Activated CD4-positive, alpha-beta T cell treated with anti-CD3 and anti-CD28 coated beads, Interleukin-2, amount 10 ng/mL, durations not matched to agents 24 days and 14 days (primary cell): ENCODE measurements at regions of chr16 and their contacts with region 1.

Region 1: DNA sequence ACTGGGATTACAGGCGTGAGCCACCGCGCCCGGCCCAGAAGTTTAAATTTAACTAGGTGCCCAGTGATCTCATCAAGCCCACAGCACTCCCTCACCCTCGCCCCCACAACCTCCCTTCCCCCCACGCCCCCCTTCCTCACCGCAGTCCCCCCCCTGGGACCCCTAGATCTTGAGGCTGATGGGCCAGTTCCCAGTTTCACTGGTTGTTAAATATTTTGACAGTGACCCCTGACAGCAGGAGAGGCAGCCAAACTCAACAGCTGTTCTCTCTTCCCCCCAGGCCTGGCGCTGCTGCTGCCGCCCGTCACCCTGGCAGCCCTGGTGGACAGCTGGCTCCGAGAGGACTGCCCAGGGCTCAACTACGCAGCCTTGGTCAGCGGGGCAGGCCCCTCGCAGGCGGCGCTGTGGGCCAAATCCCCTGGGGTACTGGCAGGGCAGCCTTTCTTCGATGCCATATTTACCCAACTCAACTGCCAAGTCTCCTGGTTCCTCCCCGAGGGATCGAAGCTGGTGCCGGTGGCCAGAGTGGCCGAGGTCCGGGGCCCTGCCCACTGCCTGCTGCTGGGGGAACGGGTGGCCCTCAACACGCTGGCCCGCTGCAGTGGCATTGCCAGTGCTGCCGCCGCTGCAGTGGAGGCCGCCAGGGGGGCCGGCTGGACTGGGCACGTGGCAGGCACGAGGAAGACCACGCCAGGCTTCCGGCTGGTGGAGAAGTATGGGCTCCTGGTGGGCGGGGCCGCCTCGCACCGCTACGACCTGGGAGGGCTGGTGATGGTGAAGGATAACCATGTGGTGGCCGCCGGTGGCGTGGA is 15.6 kb downstream of the QPRT start:
- DNase-seq: no peak
- H3K4me3 Mint-ChIP-seq: no peak overlapping the region
- H3K27ac Mint-ChIP-seq: no peak overlapping the region
- H3K4me1 Mint-ChIP-seq: peaks cover 9% of the 10 kb centered on the region
- H3K27me3 Mint-ChIP-seq: no peaks in the 10 kb centered on the region

Region 2: DNA sequence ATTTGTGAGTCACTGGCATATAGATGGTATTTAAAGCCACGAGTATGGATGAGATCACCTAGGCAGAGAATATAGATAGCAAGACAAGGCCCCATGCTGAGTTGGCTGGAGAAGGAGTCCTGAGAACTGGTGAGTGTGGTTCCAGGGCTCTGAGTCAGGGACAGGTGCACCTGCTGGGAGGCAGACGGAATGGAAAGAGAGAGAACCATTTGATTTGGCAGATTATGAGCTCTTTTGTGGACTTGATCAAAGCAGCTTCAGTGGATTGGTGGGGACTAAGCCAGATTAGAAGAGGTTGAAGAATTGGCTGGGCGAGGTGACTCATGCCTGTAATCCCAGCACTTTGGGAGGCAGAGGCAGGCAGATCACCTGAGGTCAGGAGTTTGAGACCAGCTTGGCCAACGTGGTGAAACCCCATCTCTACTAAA is 324.2 kb after region 1 on chr16:
- intact Hi-C with region 1: loop called (anchors 1 kb)
- DNase-seq: no peak
- H3K4me3 Mint-ChIP-seq: no peak overlapping the region
- H3K27ac Mint-ChIP-seq: no peak overlapping the region
- H3K4me1 Mint-ChIP-seq: peaks cover 6% of the 10 kb centered on the region
- H3K27me3 Mint-ChIP-seq: peaks cover 23% of the 10 kb centered on the region